ENCODE measurements at regions of chr2 and their contacts with region 1.

Region 1: DNA sequence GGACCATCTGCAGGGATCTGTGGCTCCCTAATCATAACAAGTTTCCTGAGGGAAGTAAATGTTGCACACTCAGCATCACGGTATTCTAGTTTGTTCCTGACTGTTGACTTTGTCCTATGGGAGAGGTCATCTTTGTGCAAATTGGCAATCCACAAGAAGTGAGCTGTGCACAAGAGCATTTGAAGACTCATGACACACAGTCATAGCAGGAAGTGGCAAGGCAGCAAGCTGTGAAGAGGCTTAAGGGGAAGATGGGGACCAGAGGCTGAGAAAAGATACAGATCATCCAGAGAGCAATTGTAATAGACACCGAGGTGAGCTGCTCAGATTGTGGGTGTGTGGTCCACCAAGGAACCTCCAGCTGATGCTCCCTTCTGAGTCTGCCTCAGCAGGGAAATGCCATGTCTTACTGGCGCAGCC is 2.7 kb downstream of the TNP1 start:
- DNase-seq: peak; percentile 31
- H3K4me3 Mint-ChIP-seq: no peak overlapping the region
- H3K27ac Mint-ChIP-seq: no peak overlapping the region
- H3K4me1 Mint-ChIP-seq: peaks cover 18% of the 10 kb centered on the region
- H3K27me3 Mint-ChIP-seq: no peaks in the 10 kb centered on the region

Region 2: GRCh38 chr2:217090024-217090473 is 232.9 kb after region 1 on chr2:
- CTCF ChIA-PET with region 1: no interaction called
- intact Hi-C with region 1: loop called (anchors 5 kb)
- DNase-seq: peak; percentile 46
- H3K4me3 Mint-ChIP-seq: no peak overlapping the region
- H3K27ac Mint-ChIP-seq: no peak overlapping the region
- H3K4me1 Mint-ChIP-seq: peaks cover 25% of the 10 kb centered on the region
- H3K27me3 Mint-ChIP-seq: peaks cover 16% of the 10 kb centered on the region

Measured in activated naive CD4-positive, alpha-beta T cell treated with anti-CD3 and anti-CD28 coated beads for 36 hours (primary cell).